A549 (cell line): ENCODE measurements at regions of chr3 and their contacts with region 1.

Region 1: GRCh38 chr3:69691860-69692259 is 47.4 kb upstream of the MITF start:
- DNase-seq: no peak
- ATAC-seq: no peak
- H3K4me3 ChIP-seq: no peak overlapping the region
- H3K27ac ChIP-seq: 0 out of 6 replicates have a peak overlapping the region, but pooled peaks of 1 of the 2 experiments have one; percentile 36
- H3K4me1 ChIP-seq: 0 out of 3 replicates have a peak, but pooled peaks cover 8% of the 10 kb centered on the region
- CTCF ChIP-seq: no peak
- EP300 ChIP-seq: no peak
- POLR2A ChIP-seq: no peak
- RAD21 ChIP-seq: no peak

Region 2: DNA sequence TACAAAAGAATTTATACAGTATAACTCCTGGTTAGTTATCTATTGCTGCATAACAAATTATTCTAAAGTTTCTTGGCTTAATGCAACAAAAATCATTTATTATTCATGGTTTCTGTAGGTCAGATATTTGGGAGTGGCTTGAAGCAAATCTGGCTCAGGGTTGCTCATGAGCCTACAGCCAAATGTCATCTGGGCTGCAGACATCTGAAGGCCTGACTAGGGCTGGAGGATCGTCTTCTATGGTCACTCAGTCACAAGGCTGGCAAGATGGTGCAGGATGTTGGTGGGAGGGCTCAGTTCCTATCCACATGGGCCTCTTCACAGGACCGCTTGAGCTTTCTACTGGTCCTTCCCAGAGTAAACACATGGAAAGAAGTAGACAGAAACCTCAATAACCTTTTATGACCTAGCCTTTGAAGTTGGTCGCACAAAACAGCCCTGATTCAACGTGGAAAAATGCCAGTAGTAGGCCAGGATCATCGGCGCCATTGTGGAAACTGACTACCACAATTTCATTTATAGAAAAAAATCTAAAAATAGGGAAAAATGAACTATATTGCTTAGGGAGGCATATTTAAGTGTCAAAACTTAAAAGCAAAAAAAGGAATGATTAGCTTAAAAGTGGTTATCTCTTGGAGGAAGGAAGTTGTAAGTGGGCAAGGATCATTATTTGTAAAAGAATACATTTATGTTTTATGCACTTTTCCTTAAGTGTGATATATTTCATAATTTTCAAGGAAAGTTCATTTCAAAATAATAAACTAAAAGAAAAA is 37.5 kb after region 1 on chr3:
- CTCF ChIA-PET with region 1: interaction called, 10 read pairs
- POLR2A ChIA-PET with region 1: no interaction called
- DNase-seq: no peak
- ATAC-seq: no peak
- H3K4me3 ChIP-seq: no peak overlapping the region
- H3K27ac ChIP-seq: no peak overlapping the region
- H3K4me1 ChIP-seq: peaks cover 9% of the 10 kb centered on the region; the same call in 2 of the 3 replicates
- CTCF ChIP-seq: no peak
- EP300 ChIP-seq: no peak
- POLR2A ChIP-seq: no peak
- RAD21 ChIP-seq: no peak

Region 3: DNA sequence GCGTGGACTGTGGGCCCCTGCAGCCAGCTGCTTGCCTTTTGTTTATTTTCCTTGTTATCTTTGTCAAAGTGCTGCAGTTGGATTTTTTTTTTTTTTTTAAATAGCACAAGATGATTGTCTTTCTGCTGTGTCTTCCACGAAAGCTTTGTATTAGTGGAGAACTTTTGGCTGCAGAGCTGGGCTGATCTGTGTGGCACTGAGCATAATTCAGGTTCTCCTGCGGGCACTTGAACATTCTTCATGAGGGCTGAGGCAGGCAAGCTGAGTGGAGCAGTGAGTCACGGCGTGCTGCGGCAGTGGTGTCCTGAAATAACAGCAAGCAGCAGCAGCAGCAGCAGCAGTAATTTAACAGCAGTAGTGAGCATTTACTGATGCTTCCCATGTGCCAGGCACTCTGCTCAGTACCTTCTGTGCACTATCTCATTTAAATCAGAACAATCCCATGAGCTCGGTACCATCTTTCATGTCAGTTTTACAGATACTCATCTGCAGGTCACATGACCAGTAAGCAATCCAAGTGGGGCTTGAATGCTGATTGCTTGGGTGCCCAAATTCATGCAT is 93.2 kb after region 1 on chr3:
- CTCF ChIA-PET with region 1: interaction called, 226 read pairs
- POLR2A ChIA-PET with region 1: no interaction called
- DNase-seq: peak; percentile 60 to 65
- ATAC-seq: peak; percentile 96 to 98
- H3K4me3 ChIP-seq: peak overlapping the region; percentile 8; the same call in 1 of the 3 replicates
- H3K27ac ChIP-seq: peak overlapping the region; percentile 66 to 81
- H3K4me1 ChIP-seq: peaks cover 41% of the 10 kb centered on the region
- CTCF ChIP-seq: no peak
- EP300 ChIP-seq: no peak
- POLR2A ChIP-seq: no peak
- RAD21 ChIP-seq: no peak

Region 4: GRCh38 chr3:69865920-69866679 is 174.2 kb after region 1 on chr3:
- CTCF ChIA-PET with region 1: interaction called, 16 read pairs
- POLR2A ChIA-PET with region 1: interaction called, 3 read pairs
- DNase-seq: peak in 1 of 2 experiments; percentile 65
- ATAC-seq: peak; percentile 86
- H3K4me3 ChIP-seq: peak overlapping the region; percentile 45
- H3K27ac ChIP-seq: peak overlapping the region; percentile 80 to 85
- H3K4me1 ChIP-seq: peaks cover 56% of the 10 kb centered on the region
- CTCF ChIP-seq: no peak
- EP300 ChIP-seq: no peak
- POLR2A ChIP-seq: no peak
- RAD21 ChIP-seq: no peak